ENCODE measurements at regions of chr1 and their contacts with region 1.

Region 1: DNA sequence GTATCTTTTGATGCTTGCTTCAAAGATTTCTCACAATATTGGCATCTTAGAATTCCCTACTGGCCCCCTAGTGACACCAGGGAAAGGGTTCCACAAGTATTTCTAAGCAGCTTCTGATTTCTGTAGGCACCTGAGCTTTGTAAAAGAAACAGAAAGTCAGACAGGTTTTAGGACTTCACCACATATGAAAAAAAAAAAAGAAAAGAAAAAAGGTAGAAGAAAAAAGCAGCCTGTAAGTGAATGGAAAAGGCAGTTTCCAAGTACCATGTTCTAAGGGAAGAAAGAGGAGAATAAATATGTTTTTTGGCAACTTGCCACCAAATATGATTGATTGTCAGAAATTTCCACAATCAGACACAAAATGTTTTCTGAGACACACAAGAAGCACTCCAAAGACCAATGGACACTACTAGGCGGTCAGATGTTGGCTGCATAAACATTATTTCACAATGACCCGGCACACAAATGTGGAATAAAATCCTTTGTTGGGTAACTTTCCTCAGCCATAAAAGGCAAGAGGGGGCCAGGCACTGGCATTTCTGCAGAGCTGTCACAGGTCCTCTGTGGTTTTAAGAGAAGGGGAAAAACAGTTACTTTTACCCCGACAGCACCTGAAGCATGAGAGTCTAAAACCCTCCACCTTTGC is 12.7 kb upstream of the CPLANE2 start:
- DNase-seq: peak in 1 of 3 donors; percentile 73
- ATAC-seq: peak; percentile 51 to 63 (median 55)
- H3K4me3 ChIP-seq: no peak overlapping the region
- H3K27ac ChIP-seq: peak overlapping the region in 2 of 3 donors; percentile 75 to 77
- H3K4me1 ChIP-seq: peaks cover 0 to 49% (median 18%) of the 10 kb centered on the region in 4 donors
- H3K27me3 ChIP-seq: no peaks in the 10 kb centered on the region
- CTCF ChIP-seq: no peak
- POLR2A ChIP-seq: no peak

Region 2: DNA sequence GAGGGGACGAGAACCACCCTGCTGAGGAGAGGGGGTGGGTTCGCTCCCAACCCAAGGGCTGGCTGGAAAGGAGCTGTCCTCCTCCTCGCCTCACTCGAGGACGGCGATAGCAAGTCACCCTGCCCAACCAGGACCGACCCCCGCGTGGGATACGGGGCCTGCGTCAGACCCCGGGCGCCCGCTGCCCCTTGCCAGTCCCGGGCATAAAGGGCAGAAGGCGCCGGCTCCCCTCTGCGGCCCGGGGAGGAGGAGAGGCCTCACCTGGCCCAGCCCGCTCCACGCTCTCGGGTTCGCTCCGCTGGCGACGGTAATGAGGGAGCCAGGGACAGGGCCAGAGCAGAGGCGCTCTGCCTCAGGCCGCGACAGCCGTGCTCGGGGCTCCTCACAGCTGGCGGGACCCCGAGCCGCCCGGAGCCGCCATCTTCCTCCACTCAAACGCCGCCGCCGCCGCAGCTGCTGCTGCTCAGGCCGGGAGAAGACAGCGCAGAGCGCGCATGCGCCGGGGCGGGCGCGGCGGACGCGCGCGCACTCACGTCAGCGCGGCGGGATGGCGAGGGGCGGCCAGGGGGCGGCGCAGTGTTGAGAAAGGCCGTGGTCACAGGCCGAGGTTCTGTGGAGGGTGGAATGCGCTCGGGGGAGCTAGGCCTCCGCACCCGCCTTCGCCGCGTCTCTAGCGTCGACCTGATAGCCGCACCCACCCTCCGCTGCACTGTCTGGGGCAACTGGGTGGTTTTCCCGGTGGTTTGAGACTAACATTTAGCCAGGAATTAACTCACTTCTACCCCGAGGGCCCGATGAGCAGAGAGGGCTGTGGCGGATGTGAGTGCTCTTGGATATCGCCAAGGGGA is 102.5 kb after region 1 on chr1 and contains the start of gene FBXO42:
- intact Hi-C with region 1: loop called in 1 of 2 experiments (anchors 10 kb)
- DNase-seq: peak; percentile 92 to 93 (median 93)
- ATAC-seq: peak; percentile 91 to 97 (median 95)
- H3K4me3 ChIP-seq: peak within 1 kb of the TSS; percentile 71 to 94 (median 90)
- H3K27ac ChIP-seq: peak within 1 kb of the TSS; percentile 68 to 93 (median 93)
- H3K4me1 ChIP-seq: peaks cover 0 to 7% (median 0%) of the 10 kb centered on the region in 4 donors
- H3K27me3 ChIP-seq: no peaks in the 10 kb centered on the region
- CTCF ChIP-seq: peak; percentile 34 to 57 (median 52)
- POLR2A ChIP-seq: peak; percentile 94
- total RNA-seq, gene FBXO42: 7.9 to 14.1 (median 10.2) TPM